Breast epithelium (tissue), 4 donors: ENCODE measurements at regions of chr2 and their contacts with region 1.

Region 1: DNA sequence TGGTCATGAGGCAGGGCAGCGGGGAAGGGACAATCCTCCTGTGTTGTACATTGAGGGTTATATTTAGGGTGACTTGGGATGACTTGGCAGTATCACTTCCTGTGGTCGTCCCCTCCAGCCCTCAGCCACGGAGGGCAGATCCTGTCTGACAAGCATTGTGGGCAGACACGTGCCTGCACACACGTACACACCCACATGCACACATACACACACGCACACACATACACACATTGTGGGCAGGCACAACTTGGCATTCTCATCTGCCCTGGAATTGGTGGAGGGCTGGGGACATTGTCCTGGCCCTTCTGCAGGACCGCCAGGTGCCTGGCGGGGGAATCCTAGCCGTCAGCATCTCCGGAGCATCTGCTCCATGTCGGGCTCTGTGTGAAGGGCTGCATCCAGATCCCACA is 47.6 kb downstream of the ODC1 start:
- DNase-seq: no peak
- H3K4me3 ChIP-seq: no peak overlapping the region
- H3K27ac ChIP-seq: peak overlapping the region; percentile 17 to 57
- H3K4me1 ChIP-seq: peaks cover 0 to under 1% of the 10 kb centered on the region in 2 donors
- H3K27me3 ChIP-seq: no peaks in the 10 kb centered on the region
- CTCF ChIP-seq: no peak
- POLR2A ChIP-seq: no peak

Region 2: DNA sequence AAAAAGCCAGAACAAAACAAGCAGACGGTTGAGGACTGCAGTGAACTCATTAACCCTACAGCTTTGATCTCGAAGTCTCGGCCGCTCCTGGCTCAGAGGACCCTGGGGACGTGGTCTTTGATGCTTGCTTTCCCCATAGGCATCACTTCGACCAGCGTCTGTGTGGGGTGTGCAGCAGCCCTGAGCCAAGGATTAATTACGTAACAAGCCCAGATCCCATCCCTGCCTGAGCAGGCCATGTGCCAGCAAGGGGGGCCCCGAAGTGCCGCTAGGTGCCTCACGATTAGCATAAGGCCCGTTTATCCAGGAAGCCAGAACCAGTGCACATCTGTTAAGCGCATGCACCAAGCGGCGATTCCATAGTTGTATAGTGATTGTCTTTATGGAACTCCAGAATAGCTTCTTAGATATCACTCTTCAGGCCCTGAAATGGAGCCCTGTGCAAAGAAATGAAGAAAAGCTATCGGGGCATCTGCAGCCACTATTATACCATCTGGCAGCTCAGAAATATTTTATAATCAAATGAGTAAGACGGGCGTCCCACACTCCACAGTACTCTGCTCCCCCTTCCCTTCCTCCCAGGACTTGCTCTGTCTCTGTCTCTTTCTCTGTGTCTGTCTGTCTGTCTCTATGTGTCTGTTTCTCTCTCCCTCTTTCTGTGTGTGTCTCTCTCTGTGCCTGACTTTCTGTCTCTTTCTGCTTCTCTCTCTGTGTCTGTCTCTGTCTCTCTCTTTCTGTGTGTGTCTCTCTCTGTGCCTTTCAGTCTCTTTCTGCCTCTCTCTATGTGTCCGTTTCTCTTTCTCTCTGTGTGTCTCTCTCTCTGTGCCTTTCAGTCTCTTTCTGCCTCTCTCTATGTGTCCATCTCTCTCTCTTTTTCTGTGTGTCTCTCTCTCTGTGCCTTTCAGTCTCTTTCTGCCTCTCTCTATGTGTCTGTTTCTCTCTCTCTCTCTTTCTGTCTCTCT is 56.2 kb before region 1 on chr2:
- intact Hi-C with region 1: loop called (anchors 2 kb)
- DNase-seq: no peak
- H3K4me3 ChIP-seq: no peak overlapping the region
- H3K27ac ChIP-seq: no peak overlapping the region
- H3K4me1 ChIP-seq: no peaks in the 10 kb centered on the region
- H3K27me3 ChIP-seq: no peaks in the 10 kb centered on the region
- CTCF ChIP-seq: no peak
- POLR2A ChIP-seq: no peak

Region 3: GRCh38 chr2:10378189-10378588 is 22.4 kb before region 1 on chr2:
- intact Hi-C with region 1: no loop called
- DNase-seq: no peak
- H3K4me3 ChIP-seq: no peak overlapping the region
- H3K27ac ChIP-seq: no peak overlapping the region
- H3K4me1 ChIP-seq: no peaks in the 10 kb centered on the region
- H3K27me3 ChIP-seq: no peaks in the 10 kb centered on the region
- CTCF ChIP-seq: no peak
- POLR2A ChIP-seq: no peak

Region 4: DNA sequence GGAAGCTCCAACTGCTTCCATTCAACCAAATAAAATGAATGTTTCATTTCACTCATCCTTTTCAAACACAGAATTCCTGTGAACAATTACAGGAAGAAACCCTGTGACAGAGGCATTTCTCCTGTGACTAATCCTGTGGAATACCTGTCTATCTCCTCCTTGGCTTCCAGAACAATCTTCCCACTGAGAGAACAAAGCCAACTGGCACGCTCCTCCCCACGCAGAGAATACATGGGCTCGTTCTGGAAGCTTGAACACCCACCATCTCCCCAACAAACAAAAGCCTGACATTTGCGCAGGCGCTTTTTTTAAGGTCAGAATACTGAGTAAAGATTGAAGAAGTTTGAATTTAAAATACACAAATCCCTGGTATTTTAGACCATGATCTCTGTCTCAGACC is 650.0 kb after region 1 on chr2:
- intact Hi-C with region 1: loop called (anchors 5 kb)
- DNase-seq: no peak
- H3K4me3 ChIP-seq: no peak overlapping the region
- H3K27ac ChIP-seq: no peak overlapping the region
- H3K4me1 ChIP-seq: no peaks in the 10 kb centered on the region
- H3K27me3 ChIP-seq: no peaks in the 10 kb centered on the region
- CTCF ChIP-seq: no peak
- POLR2A ChIP-seq: no peak